ENCODE measurements at regions of chr14 and their contacts with region 1.

Region 1: DNA sequence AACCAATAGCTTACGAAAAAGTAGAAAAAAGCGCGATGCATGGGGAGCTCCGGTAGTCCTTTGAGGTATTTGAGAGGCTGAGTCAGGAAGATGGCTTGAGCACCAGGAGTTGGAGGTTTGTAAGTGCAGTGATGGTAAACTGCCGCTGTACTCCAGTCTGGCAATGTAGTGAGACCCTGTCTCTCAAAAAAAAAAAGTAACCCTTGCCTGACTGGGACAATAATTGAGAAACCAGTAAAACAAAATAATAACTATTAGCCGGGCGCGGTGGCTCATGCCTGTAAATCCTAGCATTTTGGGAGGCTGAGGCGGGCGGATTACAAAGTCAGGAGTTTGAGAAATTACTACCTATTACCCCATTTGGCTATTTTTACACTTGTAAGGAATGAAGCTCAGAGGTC is 632 bp upstream of the ACOT2 start:
- DNase-seq: no peak
- ATAC-seq: no peak
- H3K4me3 ChIP-seq: peak overlapping the region; percentile 55 to 94 (median 78)
- H3K27ac ChIP-seq: peak overlapping the region in 11 of 12 donors; percentile 85 to 97 (median 93)
- H3K4me1 ChIP-seq: peaks cover 0 to 43% (median 25%) of the 10 kb centered on the region in 12 donors
- H3K27me3 ChIP-seq: no peaks in the 10 kb centered on the region
- CTCF ChIP-seq: no peak
- POLR2A ChIP-seq: no peak

Region 2: GRCh38 chr14:73491256-73492042 is 76.9 kb before region 1 on chr14:
- intact Hi-C with region 1: loop called in 1 of 10 experiments (anchors 5 kb)
- DNase-seq: peak; percentile 35 to 78 (median 61)
- ATAC-seq: peak in 3 of 4 donors; percentile 29 to 64 (median 62)
- H3K4me3 ChIP-seq: peak overlapping the region; percentile 40 to 92 (median 78)
- H3K27ac ChIP-seq: peak overlapping the region; percentile 66 to 95 (median 88)
- H3K4me1 ChIP-seq: peaks cover 0 to 43% (median 28%) of the 10 kb centered on the region in 12 donors
- H3K27me3 ChIP-seq: no peaks in the 10 kb centered on the region
- CTCF ChIP-seq: no peak
- POLR2A ChIP-seq: no peak

Region 3: GRCh38 chr14:73503648-73504047 is 64.7 kb before region 1 on chr14:
- intact Hi-C with region 1: loop called in 1 of 10 experiments (anchors 5 kb)
- DNase-seq: no peak
- ATAC-seq: no peak
- H3K4me3 ChIP-seq: no peak overlapping the region
- H3K27ac ChIP-seq: no peak overlapping the region
- H3K4me1 ChIP-seq: peaks cover 0 to 3% (median 0%) of the 10 kb centered on the region in 12 donors
- H3K27me3 ChIP-seq: no peaks in the 10 kb centered on the region
- CTCF ChIP-seq: no peak
- POLR2A ChIP-seq: no peak

Region 4: GRCh38 chr14:73526569-73526968 is 41.8 kb before region 1 on chr14:
- intact Hi-C with region 1: loop called in 2 of 10 experiments (anchors 5 kb)
- DNase-seq: peak in 4 of 5 donors; percentile 60 to 82 (median 72)
- ATAC-seq: peak; percentile 93 to 96 (median 94)
- H3K4me3 ChIP-seq: no peak overlapping the region
- H3K27ac ChIP-seq: peak overlapping the region in 9 of 12 donors; percentile 33 to 74 (median 60)
- H3K4me1 ChIP-seq: peaks cover 0 to 12% (median 0%) of the 10 kb centered on the region in 12 donors
- H3K27me3 ChIP-seq: no peaks in the 10 kb centered on the region
- CTCF ChIP-seq: no peak
- POLR2A ChIP-seq: no peak

Region 5: DNA sequence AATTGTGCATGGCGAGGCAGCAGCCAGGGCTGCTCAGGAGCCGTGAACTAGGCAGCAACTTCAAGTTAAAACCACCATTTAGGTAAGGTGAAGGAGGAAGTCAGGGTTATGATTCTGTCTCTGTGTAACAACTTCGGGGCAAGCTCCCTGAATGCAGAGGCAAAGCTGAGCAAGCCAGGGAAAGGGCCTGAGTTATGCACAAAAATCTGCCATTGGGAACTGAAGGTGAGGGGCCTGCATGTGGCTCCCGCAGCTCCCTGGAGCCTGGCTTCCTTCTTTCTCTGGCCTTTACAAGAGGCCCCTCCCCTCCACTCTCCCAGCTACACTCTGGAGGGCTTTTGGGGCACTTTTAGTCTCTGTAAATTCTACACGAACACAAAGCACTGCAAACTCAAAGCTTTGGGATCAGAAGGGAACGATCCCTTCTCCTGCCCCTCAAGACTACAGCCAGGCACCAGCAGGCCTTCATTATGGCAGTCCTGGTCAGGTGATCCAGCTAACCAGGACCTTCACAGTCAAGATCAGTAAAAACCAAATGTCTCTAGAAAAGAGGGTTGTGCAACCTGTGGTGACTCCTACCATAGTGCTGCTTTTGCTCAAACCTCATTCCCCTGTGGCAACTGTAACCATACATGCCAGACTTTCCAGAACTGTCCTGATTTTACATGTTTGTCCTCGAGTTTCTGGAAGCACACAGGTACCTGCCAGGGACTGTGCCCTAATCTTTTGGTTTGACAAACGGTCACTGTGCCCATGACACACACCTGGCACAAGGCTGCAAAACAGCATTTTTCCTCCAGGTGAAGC is 216.0 kb after region 1 on chr14:
- intact Hi-C with region 1: no loop called
- DNase-seq: no peak
- ATAC-seq: peak in 2 of 4 donors; percentile 1 to 4
- H3K4me3 ChIP-seq: peak overlapping the region in 6 of 12 donors; percentile 12 to 95 (median 79)
- H3K27ac ChIP-seq: peak overlapping the region; percentile 95 to 100 (median 98)
- H3K4me1 ChIP-seq: peaks cover 21 to 78% (median 63%) of the 10 kb centered on the region in 12 donors
- H3K27me3 ChIP-seq: no peaks in the 10 kb centered on the region
- CTCF ChIP-seq: no peak
- POLR2A ChIP-seq: no peak